Transverse colon (tissue), 4 donors: ENCODE measurements at regions of chr7 and their contacts with region 1.

Region 1: GRCh38 chr7:5620459-5620881 is 161.0 kb downstream of the RNF216 start:
- DNase-seq: no peak
- H3K4me3 ChIP-seq: no peak overlapping the region
- H3K27ac ChIP-seq: no peak overlapping the region
- H3K4me1 ChIP-seq: no peaks in the 10 kb centered on the region
- H3K27me3 ChIP-seq: no peaks in the 10 kb centered on the region
- CTCF ChIP-seq: no peak
- EP300 ChIP-seq: no peak
- POLR2A ChIP-seq: no peak

Region 2: DNA sequence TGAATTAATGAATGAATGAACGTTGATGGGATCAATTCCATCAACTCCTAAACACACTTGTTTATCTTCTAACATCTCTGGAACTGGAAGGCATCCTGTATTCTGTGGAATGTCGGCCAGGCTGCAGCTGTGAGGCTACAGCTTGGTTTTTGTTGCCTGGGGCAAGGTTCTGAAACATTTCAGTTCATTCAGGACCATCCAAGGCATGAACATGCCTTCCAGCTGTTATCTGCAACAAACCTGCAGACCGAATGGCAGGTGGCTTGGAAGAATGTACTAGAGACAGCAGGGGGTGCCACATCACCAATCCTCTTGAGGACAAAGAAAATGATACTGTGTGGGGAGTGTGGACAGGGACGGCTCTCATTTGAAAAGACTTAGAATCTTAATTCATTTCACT is 771.1 kb before region 1 on chr7:
- in situ Hi-C with region 1: no loop called
- intact Hi-C with region 1: loop called (anchors 5 kb)
- DNase-seq: no peak
- H3K4me3 ChIP-seq: no peak overlapping the region
- H3K27ac ChIP-seq: no peak overlapping the region
- H3K4me1 ChIP-seq: no peaks in the 10 kb centered on the region
- H3K27me3 ChIP-seq: no peaks in the 10 kb centered on the region
- CTCF ChIP-seq: peak in 1 of 5 experiments; percentile 21
- EP300 ChIP-seq: no peak
- POLR2A ChIP-seq: no peak

Region 3: GRCh38 chr7:5348134-5349004 is 272.1 kb before region 1 on chr7:
- in situ Hi-C with region 1: no loop called
- intact Hi-C with region 1: no loop called
- DNase-seq: no peak
- H3K4me3 ChIP-seq: no peak overlapping the region
- H3K27ac ChIP-seq: peak overlapping the region in 1 of 4 donors; percentile 67
- H3K4me1 ChIP-seq: peaks cover 4 to 9% (median 4%) of the 10 kb centered on the region in 4 donors
- H3K27me3 ChIP-seq: no peaks in the 10 kb centered on the region
- CTCF ChIP-seq: no peak
- EP300 ChIP-seq: no peak
- POLR2A ChIP-seq: no peak

Region 4: GRCh38 chr7:5665094-5666025 is 44.9 kb after region 1 on chr7:
- in situ Hi-C with region 1: no loop called
- intact Hi-C with region 1: no loop called
- DNase-seq: peak; percentile 77
- H3K4me3 ChIP-seq: no peak overlapping the region
- H3K27ac ChIP-seq: peak overlapping the region in 3 of 4 donors; percentile 11 to 35 (median 29)
- H3K4me1 ChIP-seq: peaks cover 0 to 19% (median 4%) of the 10 kb centered on the region in 4 donors
- H3K27me3 ChIP-seq: no peaks in the 10 kb centered on the region
- CTCF ChIP-seq: peak; percentile 79 to 96 (median 87)
- EP300 ChIP-seq: no peak
- POLR2A ChIP-seq: no peak

Region 5: GRCh38 chr7:6035686-6036085 is 415.2 kb after region 1 on chr7:
- in situ Hi-C with region 1: no loop called
- intact Hi-C with region 1: no loop called
- DNase-seq: no peak
- H3K4me3 ChIP-seq: no peak overlapping the region
- H3K27ac ChIP-seq: no peak overlapping the region
- H3K4me1 ChIP-seq: no peaks in the 10 kb centered on the region
- H3K27me3 ChIP-seq: no peaks in the 10 kb centered on the region
- CTCF ChIP-seq: no peak
- EP300 ChIP-seq: no peak
- POLR2A ChIP-seq: no peak